A673 (cell line): ENCODE measurements at regions of chr18 and their contacts with region 1.

Region 1: GRCh38 chr18:55934821-55935220 is 346.8 kb upstream of the TCF4 start:
- DNase-seq: no peak
- H3K4me3 ChIP-seq: no peak overlapping the region
- H3K27ac ChIP-seq: no peak overlapping the region
- H3K4me1 ChIP-seq: no peaks in the 10 kb centered on the region
- H3K27me3 ChIP-seq: no peaks in the 10 kb centered on the region
- CTCF ChIP-seq: no peak

Region 2: DNA sequence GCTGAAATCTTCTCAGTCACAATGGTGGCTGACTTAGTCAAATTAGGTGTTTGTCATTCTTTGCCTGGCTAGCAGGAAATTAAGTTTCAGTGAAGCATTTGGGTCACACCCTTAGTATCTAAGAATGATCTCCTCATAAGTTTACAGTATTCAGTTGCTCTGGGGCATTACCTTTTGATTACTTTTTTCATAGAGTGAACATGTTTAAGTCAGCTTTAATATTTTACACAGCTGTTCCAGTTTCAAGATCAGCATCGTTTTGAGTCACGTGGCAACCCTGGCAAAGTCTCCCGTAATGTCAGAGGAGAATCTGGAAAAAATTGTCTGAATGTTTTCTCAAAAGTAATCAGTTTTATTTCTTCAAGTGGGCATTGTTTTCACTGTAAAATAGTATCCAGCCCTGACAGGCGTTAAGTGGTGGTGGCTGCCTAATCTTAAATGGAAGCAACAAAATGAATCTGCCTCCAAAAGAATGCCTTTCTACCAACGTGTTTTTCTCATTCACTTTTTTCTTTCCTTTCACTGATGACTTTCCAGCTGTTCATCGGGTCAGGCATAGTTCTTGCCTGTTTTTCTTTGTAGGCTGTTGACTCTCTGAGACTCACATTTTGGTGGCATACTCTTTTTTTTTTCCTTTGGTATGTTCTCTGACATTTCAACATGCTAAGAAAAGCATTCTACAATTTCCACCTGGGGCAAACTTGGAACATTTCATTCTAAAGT is 27.2 kb before region 1 on chr18:
- CTCF ChIA-PET with region 1: no interaction called
- POLR2A ChIA-PET with region 1: no interaction called
- intact Hi-C with region 1: no loop called
- DNase-seq: no peak
- H3K4me3 ChIP-seq: no peak overlapping the region
- H3K27ac ChIP-seq: no peak overlapping the region
- H3K4me1 ChIP-seq: no peaks in the 10 kb centered on the region
- H3K27me3 ChIP-seq: no peaks in the 10 kb centered on the region
- CTCF ChIP-seq: no peak

Region 3: DNA sequence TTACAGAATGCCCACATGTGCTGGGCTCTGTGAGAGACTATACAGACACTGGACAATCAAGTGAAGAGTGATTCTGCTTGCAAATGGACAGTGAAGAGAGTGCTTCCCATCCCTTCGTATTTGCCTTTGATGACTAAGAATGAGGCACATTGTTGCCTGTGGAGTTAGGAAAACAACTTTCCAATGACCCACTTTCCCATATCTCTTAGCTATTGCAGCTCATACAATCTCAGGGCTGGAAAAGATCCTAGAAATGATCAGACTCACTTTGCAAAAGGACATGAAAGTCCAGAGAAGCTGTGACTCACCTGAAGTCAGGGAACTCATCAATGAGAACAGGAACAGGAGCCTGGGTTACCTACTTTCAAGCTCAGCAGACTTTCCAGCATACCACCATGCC is 93.7 kb after region 1 on chr18:
- CTCF ChIA-PET with region 1: no interaction called
- POLR2A ChIA-PET with region 1: no interaction called
- intact Hi-C with region 1: loop called (anchors 5 kb)
- DNase-seq: no peak
- H3K4me3 ChIP-seq: no peak overlapping the region
- H3K27ac ChIP-seq: no peak overlapping the region
- H3K4me1 ChIP-seq: no peaks in the 10 kb centered on the region
- H3K27me3 ChIP-seq: no peaks in the 10 kb centered on the region
- CTCF ChIP-seq: no peak